Ovary (tissue), 10 donors: ENCODE measurements at regions of chr5 and their contacts with region 1.

Region 1: GRCh38 chr5:135944967-135945560 is 9.7 kb downstream of the LECT2 start:
- DNase-seq: peak in 3 of 5 donors; percentile 25 to 65 (median 31)
- H3K4me3 ChIP-seq: no peak overlapping the region
- H3K27ac ChIP-seq: no peak overlapping the region
- H3K4me1 ChIP-seq: no peaks in the 10 kb centered on the region
- H3K27me3 ChIP-seq: no peaks in the 10 kb centered on the region
- CTCF ChIP-seq: peak; percentile 41 to 73 (median 51)
- EP300 ChIP-seq: no peak
- POLR2A ChIP-seq: no peak

Region 2: GRCh38 chr5:135890867-135891266 is 54.2 kb before region 1 on chr5:
- intact Hi-C with region 1: no loop called
- DNase-seq: peak in 1 of 5 donors; percentile 14
- H3K4me3 ChIP-seq: no peak overlapping the region
- H3K27ac ChIP-seq: peak overlapping the region in 1 of 2 donors; percentile 26
- H3K4me1 ChIP-seq: peaks cover 15% of the 10 kb centered on the region
- H3K27me3 ChIP-seq: no peaks in the 10 kb centered on the region
- CTCF ChIP-seq: no peak
- EP300 ChIP-seq: no peak
- POLR2A ChIP-seq: no peak

Region 3: GRCh38 chr5:136073714-136074529 is 128.9 kb after region 1 on chr5:
- intact Hi-C with region 1: loop called in 1 of 4 experiments (anchors 10 kb)
- DNase-seq: no peak
- H3K4me3 ChIP-seq: no peak overlapping the region
- H3K27ac ChIP-seq: no peak overlapping the region
- H3K4me1 ChIP-seq: no peaks in the 10 kb centered on the region
- H3K27me3 ChIP-seq: no peaks in the 10 kb centered on the region
- CTCF ChIP-seq: no peak
- EP300 ChIP-seq: no peak
- POLR2A ChIP-seq: no peak